ENCODE measurements at regions of chr12 and their contacts with region 1.

Region 1: DNA sequence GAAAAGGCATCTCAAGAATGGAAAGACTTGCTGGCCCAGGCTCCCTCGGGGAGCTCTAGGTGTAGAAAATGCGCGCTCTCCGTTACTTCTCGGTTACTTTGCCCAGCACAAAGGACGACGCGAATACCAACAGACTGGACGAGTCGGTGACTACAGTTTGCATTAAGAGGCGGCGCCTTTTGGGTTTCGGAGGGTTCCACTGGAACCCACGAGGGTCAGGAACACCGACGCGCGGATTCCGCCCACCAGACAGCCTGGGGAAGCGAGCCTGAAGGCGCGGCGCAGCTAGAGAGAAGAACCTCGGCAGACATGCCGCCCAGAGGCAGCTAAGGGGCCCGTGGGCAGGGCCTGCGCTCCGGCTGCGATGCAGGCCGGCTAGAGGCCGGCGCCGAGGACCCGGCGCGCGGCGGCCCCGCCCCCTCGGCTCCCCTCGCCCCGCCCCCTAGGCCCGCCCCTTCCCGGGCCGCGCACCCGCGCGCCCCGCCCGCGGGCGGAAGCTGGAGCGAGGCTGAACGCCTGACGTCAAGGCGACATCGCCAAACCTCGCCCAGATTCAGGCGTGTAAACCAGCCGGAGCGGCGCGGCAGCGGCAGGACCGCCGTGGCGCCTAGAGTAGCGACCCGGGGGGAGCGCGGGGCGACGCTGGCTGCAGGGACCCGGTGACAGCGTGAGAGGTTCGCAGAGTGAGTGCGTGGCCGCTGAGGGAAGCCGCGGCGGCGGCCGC is at the start of gene RAP1B:
- DNase-seq: peak; percentile 82 to 94 (median 89)
- H3K4me3 ChIP-seq: peak within 1 kb of the TSS; percentile 84
- H3K4me3 Mint-ChIP-seq: peak within 1 kb of the TSS; percentile 91 to 98 (median 96)
- H3K27ac ChIP-seq: peak within 1 kb of the TSS; percentile 88
- H3K27ac Mint-ChIP-seq: peak within 1 kb of the TSS; percentile 89 to 99 (median 98)
- H3K4me1 ChIP-seq: peaks cover 28% of the 10 kb centered on the region
- H3K4me1 Mint-ChIP-seq: peaks cover 37 to 51% (median 49%) of the 10 kb centered on the region in 3 donors
- H3K27me3 ChIP-seq: no peaks in the 10 kb centered on the region
- H3K27me3 Mint-ChIP-seq: no peaks in the 10 kb centered on the region
- total RNA-seq, gene RAP1B: 271 to 281 TPM

Region 2: DNA sequence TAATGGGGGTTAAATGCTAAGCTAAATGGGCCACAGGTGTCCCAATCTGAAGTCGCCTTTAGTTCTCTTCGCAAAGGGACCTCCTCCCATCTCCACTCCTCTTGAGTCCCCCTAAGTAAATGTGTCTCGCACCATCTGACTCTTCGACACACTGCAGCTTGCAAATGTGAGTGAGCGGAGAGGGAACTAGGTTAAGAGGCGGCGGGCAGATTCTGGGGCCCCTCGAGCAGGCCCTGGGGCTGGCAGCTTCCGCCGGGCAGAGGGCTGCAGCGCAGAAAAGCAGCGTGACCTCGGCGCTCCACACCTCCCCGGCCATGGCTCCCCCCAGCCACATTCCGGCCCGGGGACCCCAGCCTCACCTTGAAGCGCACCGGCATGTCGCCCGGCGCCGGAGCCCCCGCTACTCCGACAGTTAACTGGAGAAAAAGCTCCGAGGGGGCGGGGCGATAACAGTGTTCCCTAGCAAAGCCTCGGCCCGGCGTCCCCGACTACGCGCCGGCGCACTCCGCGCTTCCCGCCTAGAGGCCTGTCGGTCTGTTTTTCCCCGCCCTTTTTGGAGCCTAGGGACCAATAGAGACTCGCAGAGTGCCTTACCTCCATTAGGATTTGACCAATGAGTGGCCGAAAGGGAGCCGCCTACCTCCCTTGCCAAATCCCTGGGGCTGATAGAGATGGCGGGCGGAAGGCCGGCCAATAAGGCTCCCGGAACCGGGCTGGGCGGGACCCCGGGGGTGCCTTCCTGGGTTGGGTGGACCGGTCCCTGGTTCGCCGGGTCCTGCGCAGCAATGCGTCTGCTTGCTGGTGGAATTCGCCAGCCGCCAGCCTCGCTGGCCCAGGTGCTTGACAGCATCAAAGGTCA is 278.4 kb before region 1 on chr12 and contains the start of gene MDM1:
- CTCF ChIA-PET with region 1: no interaction called
- POLR2A ChIA-PET with region 1: interaction called, 10 read pairs
- DNase-seq: peak; percentile 95 to 97 (median 97)
- H3K4me3 ChIP-seq: peak within 1 kb of the TSS; percentile 83
- H3K4me3 Mint-ChIP-seq: peak within 1 kb of the TSS; percentile 90 to 95 (median 90)
- H3K27ac ChIP-seq: peak within 1 kb of the TSS; percentile 52
- H3K27ac Mint-ChIP-seq: peak within 1 kb of the TSS; percentile 42 to 91 (median 87)
- H3K4me1 ChIP-seq: peaks cover 26% of the 10 kb centered on the region
- H3K4me1 Mint-ChIP-seq: peaks cover 39 to 55% (median 43%) of the 10 kb centered on the region in 3 donors
- H3K27me3 ChIP-seq: no peaks in the 10 kb centered on the region
- H3K27me3 Mint-ChIP-seq: peaks cover 0 to 13% of the 10 kb centered on the region in 2 donors
- total RNA-seq, gene MDM1: 23.6 to 25.3 TPM

Region 3: GRCh38 chr12:68364893-68365725 is 245.4 kb before region 1 on chr12:
- CTCF ChIA-PET with region 1: interaction called, 6 read pairs
- POLR2A ChIA-PET with region 1: interaction called, 22 read pairs
- DNase-seq: peak; percentile 81 to 96 (median 85)
- H3K4me3 ChIP-seq: peak overlapping the region; percentile 52
- H3K4me3 Mint-ChIP-seq: peak overlapping the region; percentile 46 to 89 (median 81)
- H3K27ac ChIP-seq: peak overlapping the region; percentile 76
- H3K27ac Mint-ChIP-seq: peak overlapping the region; percentile 88 to 99 (median 96)
- H3K4me1 ChIP-seq: peaks cover 67% of the 10 kb centered on the region
- H3K4me1 Mint-ChIP-seq: peaks cover 68 to 78% (median 77%) of the 10 kb centered on the region in 3 donors
- H3K27me3 ChIP-seq: no peaks in the 10 kb centered on the region
- H3K27me3 Mint-ChIP-seq: no peaks in the 10 kb centered on the region

Region 4: GRCh38 chr12:68538726-68539614 is 71.6 kb before region 1 on chr12:
- CTCF ChIA-PET with region 1: interaction called, 3 read pairs
- POLR2A ChIA-PET with region 1: interaction called, 28 read pairs
- DNase-seq: peak; percentile 32 to 85 (median 78)
- H3K4me3 ChIP-seq: peak overlapping the region; percentile 49
- H3K4me3 Mint-ChIP-seq: peak overlapping the region; percentile 49 to 83 (median 72)
- H3K27ac ChIP-seq: no peak overlapping the region
- H3K27ac Mint-ChIP-seq: peak overlapping the region in 7 of 8 donors; percentile 23 to 83 (median 70)
- H3K4me1 ChIP-seq: peaks cover 45% of the 10 kb centered on the region
- H3K4me1 Mint-ChIP-seq: peaks cover 61 to 67% (median 62%) of the 10 kb centered on the region in 3 donors
- H3K27me3 ChIP-seq: no peaks in the 10 kb centered on the region
- H3K27me3 Mint-ChIP-seq: no peaks in the 10 kb centered on the region

Region 5: DNA sequence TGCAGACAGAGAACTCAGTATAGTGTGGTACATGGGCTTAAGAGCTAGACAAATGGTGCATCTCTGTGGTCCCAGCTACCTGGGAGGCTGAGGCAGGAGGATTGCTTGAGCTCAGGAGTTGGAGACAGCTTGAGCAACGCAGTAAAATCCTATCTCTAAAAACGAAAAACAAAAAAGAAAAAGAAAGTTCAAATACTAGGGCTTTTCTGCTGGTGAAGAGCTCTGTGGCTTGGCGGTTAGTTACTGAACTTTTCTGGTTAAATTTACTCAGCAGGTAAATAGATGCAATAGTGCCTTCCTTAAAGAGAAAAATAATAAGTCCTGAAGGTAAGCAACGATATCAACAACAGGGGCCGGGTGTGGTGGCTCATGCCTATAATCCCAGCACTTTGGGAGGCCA is 31.3 kb before region 1 on chr12:
- CTCF ChIA-PET with region 1: interaction called, 5 read pairs
- POLR2A ChIA-PET with region 1: interaction called, 14 read pairs
- DNase-seq: peak in 1 of 5 donors; percentile 30
- H3K4me3 ChIP-seq: no peak overlapping the region
- H3K4me3 Mint-ChIP-seq: peak overlapping the region in 3 of 7 donors; percentile 9 to 53 (median 50)
- H3K27ac ChIP-seq: no peak overlapping the region
- H3K27ac Mint-ChIP-seq: peak overlapping the region in 6 of 8 donors; percentile 17 to 79 (median 43)
- H3K4me1 ChIP-seq: peaks cover 10% of the 10 kb centered on the region
- H3K4me1 Mint-ChIP-seq: peaks cover 23 to 28% (median 27%) of the 10 kb centered on the region in 3 donors
- H3K27me3 ChIP-seq: no peaks in the 10 kb centered on the region
- H3K27me3 Mint-ChIP-seq: no peaks in the 10 kb centered on the region

Region 6: DNA sequence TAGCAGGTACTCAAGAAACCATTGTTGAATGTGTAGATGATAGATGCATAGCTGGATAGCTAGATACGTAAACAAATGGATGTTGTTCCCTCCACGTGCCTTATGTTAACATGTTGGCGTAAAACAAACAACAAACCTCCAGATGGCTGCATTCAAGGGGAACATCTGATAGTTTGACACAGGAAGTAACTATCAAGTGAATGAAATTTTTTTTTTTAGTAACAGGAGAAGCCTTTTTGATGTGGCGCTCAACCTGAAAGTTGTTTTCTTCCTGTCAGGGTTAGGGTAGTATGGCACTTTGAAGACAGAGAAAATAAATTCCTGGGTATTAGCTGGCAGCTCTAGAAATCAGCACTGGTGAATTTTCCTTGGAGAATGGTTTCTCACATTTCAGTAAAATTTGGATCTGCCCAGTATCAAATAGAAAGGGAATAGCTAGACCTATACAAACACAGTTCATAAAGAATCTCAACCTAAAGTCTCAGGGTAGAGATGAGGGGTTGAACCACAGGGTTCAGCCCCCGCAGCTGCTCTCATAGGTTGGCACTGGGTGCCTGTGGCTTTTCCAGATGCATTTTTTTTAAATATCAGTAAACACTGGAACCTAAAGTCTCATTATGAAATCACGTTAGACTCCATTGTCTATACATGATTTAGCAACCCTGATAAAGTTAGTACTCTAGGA is 18.7 kb before region 1 on chr12:
- CTCF ChIA-PET with region 1: interaction called, 6 read pairs
- POLR2A ChIA-PET with region 1: interaction called, 14 read pairs
- DNase-seq: peak in 3 of 5 donors; percentile 17 to 84 (median 76)
- H3K4me3 ChIP-seq: peak overlapping the region; percentile 27
- H3K4me3 Mint-ChIP-seq: peak overlapping the region; percentile 18 to 71 (median 69)
- H3K27ac ChIP-seq: no peak overlapping the region
- H3K27ac Mint-ChIP-seq: peak overlapping the region; percentile 70 to 97 (median 82)
- H3K4me1 ChIP-seq: peaks cover 65% of the 10 kb centered on the region
- H3K4me1 Mint-ChIP-seq: peaks cover 50 to 64% (median 52%) of the 10 kb centered on the region in 3 donors
- H3K27me3 ChIP-seq: no peaks in the 10 kb centered on the region
- H3K27me3 Mint-ChIP-seq: no peaks in the 10 kb centered on the region

Region 7: GRCh38 chr12:68807576-68808387 is 197.2 kb after region 1 on chr12 and contains the start of gene MDM2:
- CTCF ChIA-PET with region 1: no interaction called
- POLR2A ChIA-PET with region 1: interaction called, 12 read pairs
- DNase-seq: peak; percentile 96 to 99 (median 98)
- H3K4me3 ChIP-seq: peak within 1 kb of the TSS; percentile 87
- H3K4me3 Mint-ChIP-seq: peak within 1 kb of the TSS; percentile 92 to 97 (median 95)
- H3K27ac ChIP-seq: peak within 1 kb of the TSS; percentile 95
- H3K27ac Mint-ChIP-seq: peak within 1 kb of the TSS; percentile 98 to 99 (median 99)
- H3K4me1 ChIP-seq: peaks cover 24% of the 10 kb centered on the region
- H3K4me1 Mint-ChIP-seq: peaks cover 30 to 43% (median 38%) of the 10 kb centered on the region in 3 donors
- H3K27me3 ChIP-seq: no peaks in the 10 kb centered on the region
- H3K27me3 Mint-ChIP-seq: peaks cover 0 to 4% of the 10 kb centered on the region in 2 donors
- total RNA-seq, gene MDM2: 237 to 246 TPM